IMR-90 (cell line): ENCODE measurements at regions of chr20 and their contacts with region 1.

Region 1: GRCh38 chr20:3753098-3753980 is 14.2 kb downstream of the ADISSP start:
- DNase-seq: peak; percentile 73
- ATAC-seq: peak; percentile 96
- H3K4me3 ChIP-seq: no peak overlapping the region
- H3K27ac ChIP-seq: no peak overlapping the region
- H3K4me1 ChIP-seq: no peaks in the 10 kb centered on the region
- H3K27me3 ChIP-seq: peaks cover 2% of the 10 kb centered on the region; the same call in 1 of the 2 replicates
- CTCF ChIP-seq: peak; percentile 80
- POLR2A ChIP-seq: no peak
- RAD21 ChIP-seq: peak; percentile 84

Region 2: DNA sequence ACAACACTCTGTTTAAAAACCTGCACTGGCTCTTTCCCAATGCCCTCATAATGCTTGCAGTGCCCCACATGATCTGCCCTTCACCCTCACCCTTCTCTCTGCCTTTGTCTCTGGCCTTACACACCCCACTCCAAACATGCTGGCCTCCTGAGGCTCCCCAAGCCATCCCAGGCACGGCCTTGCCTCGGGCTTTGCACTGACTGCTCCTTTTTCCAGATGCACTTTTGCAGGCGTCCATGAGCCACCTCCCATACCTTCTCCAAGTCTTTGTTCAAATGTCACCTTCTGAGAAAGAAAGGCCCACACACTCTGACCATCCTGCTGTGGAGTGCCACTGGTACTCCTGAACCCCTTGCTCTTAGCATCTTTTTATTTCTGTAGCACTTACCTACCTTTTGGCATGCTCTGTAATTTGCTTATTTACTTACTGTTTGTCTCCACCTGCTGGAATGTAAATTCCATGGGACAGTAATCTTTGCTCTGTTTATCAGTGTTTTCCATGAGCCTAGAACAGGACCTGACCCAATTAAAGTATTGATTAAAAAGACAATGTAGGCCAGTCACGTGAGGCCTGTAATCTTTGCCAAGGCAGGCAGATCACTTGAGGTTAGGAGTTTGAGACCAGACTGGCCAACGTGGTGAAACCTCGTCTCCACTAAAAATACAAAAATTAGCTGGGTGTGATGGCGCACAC is 120.9 kb before region 1 on chr20:
- CTCF ChIA-PET with region 1: no interaction called
- POLR2A ChIA-PET with region 1: no interaction called
- dilution Hi-C with region 1: no loop called
- in situ Hi-C with region 1: no loop called
- intact Hi-C with region 1: no loop called
- DNase-seq: no peak
- ATAC-seq: no peak
- H3K4me3 ChIP-seq: no peak overlapping the region
- H3K27ac ChIP-seq: no peak overlapping the region
- H3K4me1 ChIP-seq: no peaks in the 10 kb centered on the region
- H3K27me3 ChIP-seq: no peaks in the 10 kb centered on the region
- CTCF ChIP-seq: no peak
- POLR2A ChIP-seq: no peak
- RAD21 ChIP-seq: no peak

Region 3: DNA sequence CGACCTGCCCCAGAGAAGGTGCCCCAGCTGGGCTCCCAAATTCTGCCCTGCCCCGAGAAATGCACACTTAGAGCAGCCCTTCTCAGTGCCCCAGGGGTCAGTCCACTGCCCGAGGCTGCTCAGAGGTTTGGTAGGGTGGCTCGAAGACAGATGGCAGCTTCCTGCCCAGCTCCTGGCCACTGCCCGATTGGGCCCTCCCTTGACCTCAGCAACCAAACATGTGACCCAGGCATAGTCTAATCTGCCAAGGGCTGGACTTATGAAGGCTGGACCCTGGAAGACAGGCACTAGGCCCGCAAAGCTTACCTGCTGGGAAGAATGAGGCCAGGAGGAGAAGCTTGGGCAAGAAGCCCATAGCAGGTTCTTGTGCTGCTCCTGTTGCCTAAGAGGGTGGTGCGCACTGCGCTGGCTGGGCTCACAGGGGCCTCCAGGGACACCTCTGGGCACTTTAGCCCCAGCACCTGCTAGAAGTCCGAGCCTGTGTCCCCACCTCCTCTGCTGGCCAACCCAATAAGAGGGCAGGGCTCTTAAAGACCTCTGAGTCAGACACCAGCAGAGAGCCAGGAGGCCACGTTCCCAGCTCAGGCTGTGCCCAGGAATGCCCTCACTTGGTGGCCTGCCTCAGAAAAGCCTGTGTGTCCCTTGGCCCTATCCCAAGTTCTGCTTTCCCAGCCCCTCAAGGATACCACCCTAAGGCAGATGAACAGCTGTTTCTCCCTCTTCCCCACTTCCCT is 46.4 kb before region 1 on chr20:
- CTCF ChIA-PET with region 1: no interaction called
- POLR2A ChIA-PET with region 1: no interaction called
- dilution Hi-C with region 1: no loop called
- in situ Hi-C with region 1: no loop called
- intact Hi-C with region 1: no loop called
- DNase-seq: peak; percentile 12
- ATAC-seq: peak; percentile 62
- H3K4me3 ChIP-seq: no peak overlapping the region
- H3K27ac ChIP-seq: no peak overlapping the region
- H3K4me1 ChIP-seq: no peaks in the 10 kb centered on the region
- H3K27me3 ChIP-seq: peaks cover 33% of the 10 kb centered on the region
- CTCF ChIP-seq: no peak
- POLR2A ChIP-seq: no peak
- RAD21 ChIP-seq: no peak

Region 4: DNA sequence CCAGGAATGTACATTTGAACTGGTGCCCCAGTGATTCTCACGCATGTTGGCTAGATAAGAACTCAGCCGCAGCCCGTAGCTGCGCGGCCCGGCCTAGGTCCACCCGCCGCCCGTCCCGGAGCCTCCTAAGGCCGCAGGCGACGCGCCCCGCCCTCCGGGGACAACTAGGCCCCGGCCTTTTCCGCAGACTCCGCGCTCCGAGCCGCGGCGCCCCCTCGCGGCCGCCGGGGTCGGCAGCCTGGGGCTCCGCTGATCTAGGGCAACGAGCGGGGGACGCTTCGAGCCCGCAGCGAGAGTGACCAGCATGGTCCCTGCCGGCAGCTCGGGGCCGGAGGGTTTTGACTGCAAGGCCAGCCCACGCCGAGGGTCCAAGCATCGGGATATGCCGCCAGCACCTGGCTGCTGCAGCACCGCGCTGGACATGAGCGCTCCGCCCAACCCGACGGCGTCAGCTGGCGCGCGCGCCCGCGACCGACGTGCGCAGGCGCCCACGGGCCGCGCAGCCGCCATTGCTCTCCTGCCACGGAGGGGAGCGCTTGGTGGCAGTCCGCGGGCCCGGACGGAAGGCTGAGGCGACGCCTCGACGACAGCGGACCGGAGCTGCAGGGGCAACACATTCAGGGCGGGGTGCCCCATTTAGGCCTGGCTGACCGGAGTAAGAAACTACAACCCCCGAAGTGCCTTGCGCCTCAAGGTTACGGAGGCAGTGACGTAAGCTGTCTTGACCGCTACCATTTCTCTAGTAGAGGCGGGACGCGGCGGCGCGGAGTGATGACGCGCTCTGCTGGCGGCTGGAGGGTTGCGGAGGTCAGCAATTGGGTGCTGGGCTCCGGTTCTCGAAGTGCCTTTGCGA is 66.9 kb after region 1 on chr20 and contains the start of gene AP5S1:
- CTCF ChIA-PET with region 1: interaction called, 3 read pairs
- POLR2A ChIA-PET with region 1: no interaction called
- dilution Hi-C with region 1: no loop called
- in situ Hi-C with region 1: no loop called
- intact Hi-C with region 1: loop called (anchors 1 kb)
- DNase-seq: peak; percentile 96
- ATAC-seq: peak; percentile 93
- H3K4me3 ChIP-seq: peak within 1 kb of the TSS; percentile 70
- H3K27ac ChIP-seq: peak within 1 kb of the TSS; percentile 98
- H3K4me1 ChIP-seq: peaks cover 8% of the 10 kb centered on the region; the same call in 1 of the 2 replicates
- H3K27me3 ChIP-seq: no peaks in the 10 kb centered on the region
- CTCF ChIP-seq: peak; percentile 95
- POLR2A ChIP-seq: peak; percentile 90
- RAD21 ChIP-seq: peak; percentile 73
- total RNA-seq, gene AP5S1: 11.4 and 11.7 TPM in 2 replicates